HepG2 (cell line): ENCODE measurements at regions of chr5 and their contacts with region 1.

Region 1: GRCh38 chr5:5364932-5365331 is 57.5 kb upstream of the ICE1 start:
- DNase-seq: no peak
- ATAC-seq: no peak
- H3K4me3 ChIP-seq: no peak overlapping the region
- H3K27ac ChIP-seq: no peak overlapping the region
- H3K4me1 ChIP-seq: peaks cover 50% of the 10 kb centered on the region
- H3K27me3 ChIP-seq: no peaks in the 10 kb centered on the region
- CTCF ChIP-seq: no peak
- EP300 ChIP-seq: no peak
- POLR2A ChIP-seq: no peak
- RAD21 ChIP-seq: no peak

Region 2: GRCh38 chr5:5340206-5340729 is 24.7 kb before region 1 on chr5:
- CTCF ChIA-PET with region 1: no interaction called
- POLR2A ChIA-PET with region 1: no interaction called
- in situ Hi-C with region 1: no loop called
- intact Hi-C with region 1: no loop called
- DNase-seq: peak; percentile 73
- ATAC-seq: peak; percentile 94
- H3K4me3 ChIP-seq: no peak overlapping the region
- H3K27ac ChIP-seq: no peak overlapping the region
- H3K4me1 ChIP-seq: peaks cover 23% of the 10 kb centered on the region
- H3K27me3 ChIP-seq: no peaks in the 10 kb centered on the region
- CTCF ChIP-seq: peak; percentile 65
- EP300 ChIP-seq: no peak
- POLR2A ChIP-seq: no peak
- RAD21 ChIP-seq: peak; percentile 54; the same call in 1 of the 2 replicates

Region 3: GRCh38 chr5:5351288-5352089 is 13.4 kb before region 1 on chr5:
- CTCF ChIA-PET with region 1: no interaction called
- POLR2A ChIA-PET with region 1: interaction called, 43 read pairs
- in situ Hi-C with region 1: no loop called
- intact Hi-C with region 1: loop called (anchors 1 kb)
- DNase-seq: peak; percentile 76
- ATAC-seq: peak; percentile 64
- H3K4me3 ChIP-seq: no peak overlapping the region; a peak in 1 of 6 replicates
- H3K27ac ChIP-seq: peak overlapping the region; percentile 63
- H3K4me1 ChIP-seq: peaks cover 69% of the 10 kb centered on the region
- H3K27me3 ChIP-seq: no peaks in the 10 kb centered on the region
- CTCF ChIP-seq: no peak
- EP300 ChIP-seq: peak in 1 of 2 experiments; percentile 60; a peak in 2 of 4 replicates
- POLR2A ChIP-seq: peak in 1 of 2 experiments; percentile 62; a peak in 1 of 4 replicates
- RAD21 ChIP-seq: no peak

Region 4: DNA sequence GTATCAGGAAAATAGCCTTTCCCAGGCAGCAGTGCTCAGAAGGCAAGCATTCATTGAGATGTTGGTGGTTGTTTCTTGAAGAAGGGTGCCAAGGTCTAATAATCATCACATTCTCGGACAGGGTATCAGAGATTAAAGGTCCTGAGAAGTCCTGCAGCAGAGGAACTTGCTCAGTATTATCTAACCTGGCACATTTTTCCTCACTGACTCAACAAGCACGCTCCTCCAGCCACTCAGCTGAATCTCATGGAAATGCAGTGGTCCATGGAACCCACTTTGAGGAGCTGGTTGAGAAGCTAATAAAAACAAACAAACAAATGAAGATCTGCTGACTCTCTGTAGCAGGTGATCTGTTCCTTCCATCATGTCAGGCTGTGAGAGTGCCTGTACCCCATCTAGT is 22.3 kb after region 1 on chr5:
- CTCF ChIA-PET with region 1: no interaction called
- POLR2A ChIA-PET with region 1: no interaction called
- in situ Hi-C with region 1: no loop called
- intact Hi-C with region 1: no loop called
- DNase-seq: no peak
- ATAC-seq: no peak
- H3K4me3 ChIP-seq: no peak overlapping the region
- H3K27ac ChIP-seq: no peak overlapping the region
- H3K4me1 ChIP-seq: 0 out of 2 replicates have a peak, but pooled peaks cover 5% of the 10 kb centered on the region
- H3K27me3 ChIP-seq: no peaks in the 10 kb centered on the region; a peak in 1 of 5 replicates
- CTCF ChIP-seq: no peak
- EP300 ChIP-seq: no peak
- POLR2A ChIP-seq: no peak
- RAD21 ChIP-seq: no peak